ENCODE measurements at regions of chr1 and their contacts with region 1.

Region 1: GRCh38 chr1:244788493-244789275 is 46.8 kb upstream of the COX20 start:
- DNase-seq: no peak
- ATAC-seq: no peak
- H3K4me3 ChIP-seq: no peak overlapping the region
- H3K27ac ChIP-seq: no peak overlapping the region
- H3K4me1 ChIP-seq: no peaks in the 10 kb centered on the region
- H3K27me3 ChIP-seq: no peaks in the 10 kb centered on the region
- CTCF ChIP-seq: no peak
- POLR2A ChIP-seq: no peak

Region 2: GRCh38 chr1:244605835-244606370 is 182.8 kb before region 1 on chr1:
- intact Hi-C with region 1: loop called in 1 of 10 experiments (anchors 2 kb)
- DNase-seq: no peak
- ATAC-seq: no peak
- H3K4me3 ChIP-seq: no peak overlapping the region
- H3K27ac ChIP-seq: no peak overlapping the region
- H3K4me1 ChIP-seq: no peaks in the 10 kb centered on the region
- H3K27me3 ChIP-seq: peaks cover 0 to 5% (median 0%) of the 10 kb centered on the region in 9 donors
- CTCF ChIP-seq: no peak
- POLR2A ChIP-seq: no peak